T-cell (primary cell): ENCODE measurements at regions of chr6 and their contacts with region 1.

Region 1: DNA sequence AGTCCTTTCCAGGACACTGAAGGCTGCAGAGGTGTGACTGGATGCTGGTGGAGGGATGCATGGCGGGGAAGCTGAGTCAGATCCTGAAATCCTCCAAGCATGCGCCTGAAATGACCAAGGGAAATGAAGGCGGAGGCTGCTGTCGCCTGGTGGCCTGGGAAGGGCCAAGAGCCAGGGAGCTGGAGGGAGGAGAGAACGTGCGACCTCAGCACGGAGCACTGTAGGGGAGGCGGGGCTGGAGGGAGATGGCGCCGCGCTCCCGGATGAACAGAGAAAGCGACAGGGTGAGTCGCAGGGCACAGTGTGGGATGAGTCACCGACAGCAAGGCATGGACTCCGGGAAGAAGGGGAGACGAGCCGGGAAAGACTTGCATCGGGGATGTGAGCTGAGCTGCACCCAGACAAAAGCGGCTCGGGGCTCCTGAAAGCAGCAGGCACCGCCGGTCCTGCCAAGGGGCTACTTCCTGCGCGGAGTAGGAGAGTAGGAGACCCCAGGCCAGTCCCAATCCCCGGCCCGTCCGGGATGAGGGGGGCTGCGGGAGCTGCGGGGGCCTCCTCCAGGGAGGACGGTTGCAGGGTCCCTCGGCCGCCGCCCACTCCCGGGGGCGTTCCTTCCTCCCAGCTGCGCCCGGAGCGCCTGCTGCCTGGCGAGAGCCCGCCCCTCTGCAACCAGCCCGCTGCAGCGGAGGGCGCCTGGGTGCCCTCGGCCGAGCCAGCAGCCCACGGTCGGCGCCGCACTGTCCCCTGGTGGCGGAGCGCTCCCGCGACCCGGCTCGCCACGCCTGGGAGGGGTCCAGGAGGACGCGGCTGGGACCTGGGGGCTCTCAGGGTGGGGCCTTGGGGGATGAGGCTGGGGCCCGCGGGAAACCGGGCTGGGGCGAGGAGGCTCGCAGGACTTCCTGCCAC is 11.0 kb upstream of the NQO2 start:
- DNase-seq: peak; percentile 35 to 87 (median 65)
- ATAC-seq: peak; percentile 75 to 79 (median 76)
- H3K4me3 ChIP-seq: peak overlapping the region; percentile 81 to 97
- H3K4me3 Mint-ChIP-seq: peak overlapping the region; percentile 92 to 93 (median 93)
- H3K27ac ChIP-seq: peak overlapping the region; percentile 96
- H3K27ac Mint-ChIP-seq: peak overlapping the region; percentile 100
- H3K4me1 ChIP-seq: peaks cover 14 to 26% of the 10 kb centered on the region in 2 experiments
- H3K4me1 Mint-ChIP-seq: peaks cover 23 to 37% (median 30%) of the 10 kb centered on the region in 3 donors
- H3K27me3 ChIP-seq: no peaks in the 10 kb centered on the region
- H3K27me3 Mint-ChIP-seq: no peaks in the 10 kb centered on the region

Region 2: GRCh38 chr6:2911171-2911570 is 77.5 kb before region 1 on chr6:
- CTCF ChIA-PET with region 1: interaction called, 3 to 10 read pairs
- POLR2A ChIA-PET with region 1: no interaction called
- DNase-seq: no peak
- ATAC-seq: no peak
- H3K4me3 ChIP-seq: no peak overlapping the region
- H3K4me3 Mint-ChIP-seq: no peak overlapping the region
- H3K27ac ChIP-seq: no peak overlapping the region
- H3K27ac Mint-ChIP-seq: peak overlapping the region in 1 of 2 donors; percentile 22
- H3K4me1 ChIP-seq: peaks cover 0 to 3% of the 10 kb centered on the region in 2 experiments
- H3K4me1 Mint-ChIP-seq: peaks cover 31 to 46% (median 46%) of the 10 kb centered on the region in 3 donors
- H3K27me3 ChIP-seq: no peaks in the 10 kb centered on the region
- H3K27me3 Mint-ChIP-seq: no peaks in the 10 kb centered on the region

Region 3: DNA sequence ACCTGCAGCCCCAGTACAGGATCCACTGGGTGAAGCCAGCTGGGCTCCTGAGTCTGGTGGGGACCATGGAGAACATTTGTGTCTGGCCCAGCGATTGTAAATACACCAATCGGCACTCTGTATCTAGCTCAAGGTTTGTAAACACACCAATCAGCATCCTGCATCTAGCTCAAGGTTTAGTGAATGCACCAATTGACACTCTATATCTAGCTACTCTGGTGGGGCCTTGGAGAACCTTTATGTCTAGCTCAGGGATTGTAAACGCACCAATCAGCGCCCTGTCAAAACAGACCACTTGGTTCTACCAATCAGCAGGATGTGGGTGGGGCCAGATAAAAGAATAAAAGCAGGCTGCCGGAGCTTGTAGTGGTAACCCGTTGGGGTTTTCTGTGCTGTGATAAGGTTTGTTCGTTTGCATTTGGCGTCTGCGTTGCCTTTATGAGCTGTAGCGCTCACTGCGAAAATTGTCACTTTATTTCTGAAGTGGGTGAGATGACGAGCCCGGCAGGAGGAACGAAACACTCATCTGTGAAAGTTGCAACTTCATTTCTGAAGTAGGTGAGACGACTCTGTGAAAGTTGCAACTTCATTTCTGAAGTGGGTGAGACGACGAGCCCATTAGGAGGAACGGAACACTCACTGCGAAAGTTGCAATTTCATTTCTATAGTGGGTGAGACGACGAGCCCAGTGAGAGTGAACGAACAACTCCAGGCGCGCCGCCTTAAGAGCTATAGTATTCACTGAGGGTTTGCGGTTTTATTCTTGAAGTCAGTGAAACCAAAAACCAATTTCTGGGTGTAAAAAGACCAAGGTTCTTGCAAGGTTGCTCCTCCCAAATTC is 48.4 kb before region 1 on chr6:
- CTCF ChIA-PET with region 1: interaction called, 7 to 9 read pairs
- POLR2A ChIA-PET with region 1: interaction called, 8 to 32 read pairs
- DNase-seq: peak; percentile 35 to 87 (median 75)
- ATAC-seq: peak; percentile 72 to 77 (median 76)
- H3K4me3 ChIP-seq: peak overlapping the region; percentile 49 to 61
- H3K4me3 Mint-ChIP-seq: peak overlapping the region; percentile 80 to 84 (median 84)
- H3K27ac ChIP-seq: peak overlapping the region; percentile 76
- H3K27ac Mint-ChIP-seq: peak overlapping the region; percentile 93 to 95
- H3K4me1 ChIP-seq: peaks cover 55 to 73% of the 10 kb centered on the region in 2 experiments
- H3K4me1 Mint-ChIP-seq: peaks cover 56 to 72% (median 68%) of the 10 kb centered on the region in 3 donors
- H3K27me3 ChIP-seq: no peaks in the 10 kb centered on the region
- H3K27me3 Mint-ChIP-seq: no peaks in the 10 kb centered on the region

Region 4: DNA sequence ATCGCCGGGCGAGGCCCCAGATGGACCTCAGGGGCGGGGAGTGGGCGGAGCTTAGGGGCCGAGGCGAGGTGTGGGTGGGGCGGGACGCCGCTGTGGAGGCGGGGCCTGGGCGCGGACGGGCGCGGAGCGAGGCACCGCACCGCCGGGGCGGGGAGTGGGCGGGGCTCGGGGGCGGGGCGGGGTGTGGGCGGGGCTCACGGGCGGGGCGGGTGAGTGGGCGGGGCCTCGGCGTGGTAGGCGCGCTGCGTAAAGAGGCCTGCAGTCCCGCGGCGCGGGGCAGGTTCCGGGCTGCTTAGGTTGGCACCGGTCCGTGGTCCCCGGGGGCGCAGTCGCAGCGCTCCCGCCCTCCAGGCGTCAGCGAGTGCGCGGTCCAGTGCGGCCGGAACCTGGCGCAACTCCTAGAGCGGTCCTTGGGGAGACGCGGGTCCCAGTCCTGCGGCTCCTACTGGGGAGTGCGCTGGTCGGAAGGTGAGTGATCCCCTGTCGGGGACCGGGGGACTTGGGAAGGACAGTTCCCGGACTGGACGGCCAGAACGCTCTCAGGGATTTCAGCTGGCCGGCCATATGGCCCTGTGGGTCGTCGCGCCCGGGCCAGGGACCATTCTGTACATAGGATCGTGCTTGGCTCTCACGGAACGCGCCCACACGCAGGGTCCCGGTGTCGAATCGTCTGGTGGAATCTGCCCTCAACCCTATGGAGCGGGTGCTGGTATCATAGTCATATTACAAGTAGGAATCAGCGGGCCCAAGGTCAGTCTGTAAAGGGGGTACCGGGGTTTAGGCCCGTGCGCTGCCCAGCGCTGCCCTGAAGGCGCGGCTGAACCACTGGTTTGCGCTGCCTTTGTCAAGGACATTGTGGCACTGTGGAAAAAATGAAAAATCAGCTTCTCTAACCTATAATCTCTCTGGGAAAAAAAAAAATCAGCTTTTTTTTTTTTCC is 11.2 kb after region 1 on chr6 and contains the start of gene NQO2:
- CTCF ChIA-PET with region 1: interaction called, 3 to 10 read pairs
- POLR2A ChIA-PET with region 1: interaction called in 1 of 2 experiments, 12 read pairs
- DNase-seq: peak; percentile 69 to 97 (median 88)
- ATAC-seq: peak; percentile 79 to 89 (median 85)
- H3K4me3 ChIP-seq: peak within 1 kb of the TSS; percentile 77 to 86
- H3K4me3 Mint-ChIP-seq: peak within 1 kb of the TSS; percentile 85 to 89 (median 88)
- H3K27ac ChIP-seq: peak within 1 kb of the TSS; percentile 78
- H3K27ac Mint-ChIP-seq: peak within 1 kb of the TSS; percentile 85 to 86
- H3K4me1 ChIP-seq: peaks cover 7 to 28% of the 10 kb centered on the region in 2 experiments
- H3K4me1 Mint-ChIP-seq: peaks cover 21 to 36% (median 30%) of the 10 kb centered on the region in 3 donors
- H3K27me3 ChIP-seq: no peaks in the 10 kb centered on the region
- H3K27me3 Mint-ChIP-seq: no peaks in the 10 kb centered on the region
- total RNA-seq, gene NQO2: 9.1 to 54.6 (median 33.0) TPM